SK-N-SH (cell line): ENCODE measurements at regions of chr6 and their contacts with region 1.

Region 1: DNA sequence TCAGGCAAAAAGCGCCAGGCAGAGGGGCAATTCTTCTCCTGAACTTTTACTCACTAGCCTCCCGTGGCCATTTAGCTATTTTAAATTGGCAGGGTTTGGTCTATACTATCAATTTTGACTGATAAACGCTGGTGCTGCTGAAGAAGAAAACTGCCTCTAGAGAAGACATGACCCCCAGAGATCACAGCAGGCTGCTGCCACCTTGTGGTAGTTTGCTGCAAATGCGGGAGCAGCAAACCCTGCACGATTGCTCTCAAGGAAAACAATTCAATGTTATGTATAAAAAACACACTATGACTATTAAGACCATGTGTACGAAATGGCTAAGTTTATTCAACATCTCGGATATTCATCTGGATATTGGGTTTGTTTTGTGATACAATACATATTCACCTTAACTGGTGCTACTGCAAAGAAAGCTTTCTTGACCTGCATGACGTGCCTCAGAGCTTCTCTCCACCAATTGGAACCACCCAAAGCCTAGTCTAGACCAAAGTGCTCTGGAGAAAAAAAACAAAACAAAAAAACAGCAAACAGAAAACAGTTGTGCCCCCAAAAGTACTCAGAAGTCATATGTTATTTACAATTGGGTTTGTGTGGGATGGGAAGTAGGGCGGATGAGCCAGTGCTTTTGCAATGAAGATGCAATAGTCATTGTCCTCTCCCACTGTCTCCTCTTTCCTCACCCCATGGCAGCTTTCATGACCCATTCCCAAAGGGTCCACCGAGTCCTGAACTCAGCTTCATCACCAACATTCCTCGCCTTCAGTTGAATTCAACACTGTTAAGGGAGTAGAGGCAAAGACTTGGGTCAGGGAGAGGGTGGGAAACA is 19.6 kb upstream of the IL17F start:
- DNase-seq: peak; percentile 66
- H3K4me3 ChIP-seq: no peak overlapping the region
- H3K27ac ChIP-seq: no peak overlapping the region
- H3K4me1 ChIP-seq: peaks cover 0 to 2% of the 10 kb centered on the region in 2 experiments; a peak in 1 of 4 replicates
- H3K27me3 ChIP-seq: no peaks in the 10 kb centered on the region
- CTCF ChIP-seq: peak; percentile 98
- EP300 ChIP-seq: no peak
- RAD21 ChIP-seq: peak; percentile 87

Region 2: DNA sequence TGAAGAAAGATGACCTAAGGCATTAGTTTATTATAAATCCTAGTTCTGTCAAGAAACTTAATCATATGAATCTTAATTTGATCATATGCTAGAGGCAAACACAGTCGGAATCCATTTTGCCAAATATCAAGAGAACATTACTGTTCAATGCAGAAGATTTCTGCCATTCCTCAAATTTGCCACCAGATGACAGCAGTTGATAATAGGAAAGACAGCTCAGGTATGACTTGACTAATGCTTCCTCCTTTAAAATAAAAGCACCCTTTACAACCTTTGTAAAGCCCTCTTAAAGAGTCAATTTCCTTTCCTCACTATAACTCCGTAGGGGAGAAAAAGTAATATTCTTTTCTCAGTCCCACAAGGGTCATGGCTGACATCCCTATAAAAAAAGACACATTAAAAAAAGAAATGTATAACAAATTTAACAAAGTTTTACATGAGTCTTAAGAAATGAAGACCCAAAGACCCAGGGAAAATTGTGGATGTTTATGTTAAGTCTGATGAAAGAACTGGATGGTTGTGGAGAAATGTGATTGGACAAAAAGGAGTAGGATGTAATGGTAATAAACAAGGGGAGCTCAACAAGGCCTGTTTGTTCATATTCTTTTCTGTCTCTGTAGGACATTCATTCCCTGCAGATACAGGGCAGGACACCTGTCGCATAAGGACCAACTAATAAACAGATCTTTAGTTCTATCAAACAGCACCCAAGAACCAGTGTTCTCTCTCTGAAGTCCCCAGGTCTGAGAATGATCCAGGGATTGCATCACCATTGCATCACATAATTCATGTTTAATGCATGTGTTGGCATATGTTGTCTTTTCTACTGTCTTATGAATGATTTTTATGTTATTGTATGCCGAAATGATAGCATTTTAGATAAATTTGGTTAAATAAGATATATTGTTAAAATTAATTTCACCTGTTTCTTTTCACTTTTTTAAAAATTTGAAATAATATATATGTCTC is 100.7 kb before region 1 on chr6:
- CTCF ChIA-PET with region 1: interaction called, 14 read pairs
- POLR2A ChIA-PET with region 1: no interaction called
- DNase-seq: no peak
- H3K4me3 ChIP-seq: no peak overlapping the region
- H3K27ac ChIP-seq: no peak overlapping the region
- H3K4me1 ChIP-seq: no peaks in the 10 kb centered on the region; a peak in 1 of 4 replicates
- H3K27me3 ChIP-seq: no peaks in the 10 kb centered on the region
- CTCF ChIP-seq: peak; percentile 63
- EP300 ChIP-seq: no peak
- RAD21 ChIP-seq: peak; percentile 73

Region 3: DNA sequence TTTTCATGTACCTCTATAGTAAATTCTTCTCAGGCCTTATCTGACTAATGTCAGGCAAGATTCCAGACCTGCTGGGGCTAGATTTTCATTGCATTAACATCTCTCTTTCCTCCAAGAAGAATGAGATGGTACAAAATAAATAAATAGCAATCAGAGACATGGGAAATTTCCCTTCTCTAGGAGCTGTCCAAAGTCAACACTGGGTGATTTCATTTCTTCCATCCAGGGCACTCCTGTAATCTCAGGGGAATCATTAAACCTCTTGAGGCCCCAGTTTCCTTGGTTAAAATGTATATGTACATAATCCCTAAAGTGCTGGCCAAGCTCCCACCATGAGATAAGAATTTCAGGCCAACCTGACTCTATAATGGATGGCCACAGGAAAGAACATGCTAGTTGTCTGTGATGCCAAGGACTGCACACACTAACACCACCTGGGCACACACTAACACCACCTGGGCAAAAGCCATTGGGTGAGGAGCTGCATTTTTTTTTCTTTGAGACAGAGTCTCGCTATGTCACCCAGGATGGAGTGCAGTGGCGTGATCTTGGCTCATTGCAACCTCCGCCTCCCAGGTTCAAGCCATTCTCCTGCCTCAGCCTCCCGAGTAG is 20.5 kb before region 1 on chr6:
- CTCF ChIA-PET with region 1: interaction called, 31 read pairs
- POLR2A ChIA-PET with region 1: no interaction called
- DNase-seq: no peak
- H3K4me3 ChIP-seq: no peak overlapping the region
- H3K27ac ChIP-seq: no peak overlapping the region
- H3K4me1 ChIP-seq: no peaks in the 10 kb centered on the region
- H3K27me3 ChIP-seq: peaks cover 4% of the 10 kb centered on the region
- CTCF ChIP-seq: no peak
- EP300 ChIP-seq: no peak
- RAD21 ChIP-seq: no peak

Region 4: DNA sequence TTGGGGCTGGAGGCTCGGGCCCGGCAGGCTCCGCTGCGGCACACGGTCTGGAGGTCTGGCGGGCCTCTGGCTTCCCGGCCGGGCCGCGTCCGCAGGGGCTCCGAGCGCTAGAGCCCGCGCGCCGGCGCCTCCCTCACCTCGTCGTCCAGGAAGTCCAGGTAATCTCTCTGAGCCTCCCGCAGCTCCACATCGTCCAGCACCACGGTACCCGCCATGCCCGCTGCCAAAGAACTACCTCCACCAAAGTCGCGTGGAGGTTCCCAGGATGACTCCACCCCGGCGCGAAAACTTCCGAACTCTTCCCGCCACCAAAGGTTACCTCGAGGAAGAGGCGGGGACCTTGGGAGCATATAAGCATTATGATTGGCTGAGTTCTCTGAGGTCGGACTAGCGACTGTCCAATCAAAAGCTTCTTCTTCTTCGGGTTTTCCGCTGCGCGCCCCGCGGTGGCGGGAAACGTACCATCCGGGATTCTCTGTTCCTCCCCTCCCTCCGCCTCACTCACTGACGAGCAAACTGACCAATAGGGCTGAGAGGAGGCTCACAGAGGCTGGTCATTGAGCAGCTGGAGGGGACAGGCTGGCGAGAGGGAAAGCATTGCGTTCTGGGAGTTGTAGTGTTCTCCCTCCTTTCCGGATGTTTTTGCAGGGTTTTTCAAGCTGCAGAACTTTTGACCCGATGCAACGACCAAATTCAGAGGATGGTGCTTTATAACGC is 20.7 kb after region 1 on chr6 and contains the start of gene MCM3:
- CTCF ChIA-PET with region 1: interaction called, 60 read pairs
- POLR2A ChIA-PET with region 1: no interaction called
- DNase-seq: peak; percentile 95
- H3K4me3 ChIP-seq: peak within 1 kb of the TSS; percentile 88 to 89
- H3K27ac ChIP-seq: peak within 1 kb of the TSS; percentile 53 to 99
- H3K4me1 ChIP-seq: peaks cover 14 to 20% of the 10 kb centered on the region in 2 experiments; a peak in 3 of 4 replicates
- H3K27me3 ChIP-seq: no peaks in the 10 kb centered on the region
- CTCF ChIP-seq: no peak
- EP300 ChIP-seq: 0 out of 4 replicates have a peak, but pooled peaks of 1 of the 2 experiments have one; percentile 6
- RAD21 ChIP-seq: no peak
- polyA plus RNA-seq, gene MCM3: 62.4 and 71.4 TPM in 2 replicates

Region 5: DNA sequence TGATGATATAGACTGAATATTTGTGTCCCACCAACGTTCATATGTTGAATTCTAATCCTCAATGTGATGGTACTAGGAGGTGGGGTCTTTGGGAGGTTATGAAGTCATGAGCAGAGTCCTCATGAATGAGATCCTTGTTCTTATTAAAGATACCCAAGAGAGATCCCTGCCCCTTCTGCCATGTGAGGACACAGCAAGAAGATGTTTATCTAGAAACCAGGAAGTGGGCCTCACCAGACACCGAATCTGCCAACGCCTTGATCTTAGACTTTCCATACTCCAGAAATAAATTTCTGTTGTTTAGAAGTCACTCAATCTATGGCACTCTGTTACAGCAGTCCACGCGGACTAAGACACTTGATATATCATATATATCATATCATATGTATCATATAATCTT is 952.4 kb after region 1 on chr6:
- CTCF ChIA-PET with region 1: no interaction called
- POLR2A ChIA-PET with region 1: no interaction called
- DNase-seq: no peak
- H3K4me3 ChIP-seq: no peak overlapping the region
- H3K27ac ChIP-seq: no peak overlapping the region
- H3K4me1 ChIP-seq: no peaks in the 10 kb centered on the region
- H3K27me3 ChIP-seq: no peaks in the 10 kb centered on the region
- CTCF ChIP-seq: no peak
- EP300 ChIP-seq: no peak
- RAD21 ChIP-seq: no peak